A673 (cell line): ENCODE measurements at regions of chr9 and their contacts with region 1.

Region 1: GRCh38 chr9:21060919-21061561 is 16.7 kb downstream of the IFNB1 start:
- DNase-seq: no peak
- H3K4me3 ChIP-seq: no peak overlapping the region
- H3K27ac ChIP-seq: no peak overlapping the region
- H3K4me1 ChIP-seq: no peaks in the 10 kb centered on the region
- H3K27me3 ChIP-seq: no peaks in the 10 kb centered on the region
- CTCF ChIP-seq: no peak

Region 2: DNA sequence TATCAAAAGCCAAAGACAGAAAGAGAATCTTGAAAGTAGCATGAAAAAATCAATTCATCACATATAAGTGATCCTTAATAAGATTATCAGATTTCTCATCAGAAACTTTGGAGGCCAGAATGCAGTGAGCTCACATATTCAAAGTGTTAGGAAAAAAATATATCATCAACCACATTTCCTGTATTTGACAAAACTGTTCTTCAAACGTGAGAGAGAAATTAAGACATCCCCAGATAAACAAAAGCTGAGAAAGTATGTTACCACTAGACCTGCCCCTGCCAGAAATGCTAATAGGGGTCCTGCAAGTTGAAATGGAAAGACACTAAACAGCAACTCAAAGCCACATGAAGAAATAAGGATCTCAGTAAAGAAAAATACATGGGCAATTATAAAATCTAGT is 59.5 kb before region 1 on chr9:
- CTCF ChIA-PET with region 1: no interaction called
- POLR2A ChIA-PET with region 1: no interaction called
- intact Hi-C with region 1: loop called (anchors 10 kb)
- DNase-seq: peak; percentile 33
- H3K4me3 ChIP-seq: no peak overlapping the region
- H3K27ac ChIP-seq: no peak overlapping the region
- H3K4me1 ChIP-seq: no peaks in the 10 kb centered on the region
- H3K27me3 ChIP-seq: no peaks in the 10 kb centered on the region
- CTCF ChIP-seq: no peak